Caco-2 (cell line): ENCODE measurements at regions of chr9 and their contacts with region 1.

Region 1: GRCh38 chr9:122860317-122861142 is 32.1 kb upstream of the PDCL start:
- DNase-seq: no peak
- H3K4me3 ChIP-seq: no peak overlapping the region
- H3K4me3 Mint-ChIP-seq: no peak overlapping the region
- H3K27ac Mint-ChIP-seq: no peak overlapping the region
- H3K4me1 ChIP-seq: no peaks in the 10 kb centered on the region
- H3K4me1 Mint-ChIP-seq: no peaks in the 10 kb centered on the region
- H3K27me3 ChIP-seq: no peaks in the 10 kb centered on the region
- H3K27me3 Mint-ChIP-seq: no peaks in the 10 kb centered on the region
- CTCF ChIP-seq: no peak

Region 2: GRCh38 chr9:122875523-122875922 is 15.0 kb after region 1 on chr9:
- CTCF ChIA-PET with region 1: no interaction called
- POLR2A ChIA-PET with region 1: no interaction called
- intact Hi-C with region 1: loop called (anchors 1 kb)
- DNase-seq: no peak
- H3K4me3 ChIP-seq: no peak overlapping the region
- H3K4me3 Mint-ChIP-seq: no peak overlapping the region
- H3K27ac Mint-ChIP-seq: no peak overlapping the region
- H3K4me1 ChIP-seq: peaks cover 5% of the 10 kb centered on the region
- H3K4me1 Mint-ChIP-seq: peaks cover 18% of the 10 kb centered on the region
- H3K27me3 ChIP-seq: no peaks in the 10 kb centered on the region
- H3K27me3 Mint-ChIP-seq: no peaks in the 10 kb centered on the region
- CTCF ChIP-seq: no peak